Endothelial cell of umbilical vein (primary cell): ENCODE measurements at regions of chr10 and their contacts with region 1.

Region 1: GRCh38 chr10:117174439-117175214 is 22.7 kb upstream of the KCNK18 start:
- DNase-seq: peak; percentile 81
- H3K4me3 ChIP-seq: peak overlapping the region in 1 of 3 experiments; percentile 16
- H3K27ac ChIP-seq: no peak overlapping the region
- H3K4me1 ChIP-seq: peaks cover 9% of the 10 kb centered on the region
- H3K27me3 ChIP-seq: peaks cover 27 to 32% of the 10 kb centered on the region in 2 experiments
- CTCF ChIP-seq: peak; percentile 83 to 88
- POLR2A ChIP-seq: no peak

Region 2: DNA sequence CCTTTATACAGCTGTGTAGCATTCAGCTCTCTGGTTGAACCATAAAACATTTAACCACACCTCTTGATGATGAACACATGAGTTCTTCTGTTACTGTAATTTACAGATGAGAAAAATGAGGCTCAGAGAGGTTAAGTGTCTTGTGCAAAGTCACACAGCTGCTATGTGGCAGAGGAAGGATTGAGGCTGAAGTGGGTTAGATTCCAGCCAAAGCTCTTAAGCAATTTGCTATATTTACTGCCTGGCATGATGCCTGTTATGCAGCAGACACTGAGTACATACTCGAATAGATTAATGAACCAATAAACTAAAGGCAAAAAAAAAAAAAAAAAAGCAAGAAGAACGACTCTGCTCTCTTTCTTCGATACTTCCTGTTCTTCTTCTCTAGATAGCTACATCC is 937.4 kb before region 1 on chr10:
- CTCF ChIA-PET with region 1: no interaction called
- POLR2A ChIA-PET with region 1: no interaction called
- dilution Hi-C with region 1: no loop called
- intact Hi-C with region 1: no loop called
- DNase-seq: no peak
- H3K4me3 ChIP-seq: no peak overlapping the region
- H3K27ac ChIP-seq: no peak overlapping the region
- H3K4me1 ChIP-seq: no peaks in the 10 kb centered on the region
- H3K27me3 ChIP-seq: no peaks in the 10 kb centered on the region
- CTCF ChIP-seq: no peak
- POLR2A ChIP-seq: no peak

Region 3: GRCh38 chr10:116690356-116691322 is 484.0 kb before region 1 on chr10:
- CTCF ChIA-PET with region 1: interaction called, 15 read pairs
- POLR2A ChIA-PET with region 1: no interaction called
- dilution Hi-C with region 1: no loop called
- intact Hi-C with region 1: loop called (anchors 1 kb)
- DNase-seq: no peak
- H3K4me3 ChIP-seq: no peak overlapping the region
- H3K27ac ChIP-seq: no peak overlapping the region
- H3K4me1 ChIP-seq: no peaks in the 10 kb centered on the region
- H3K27me3 ChIP-seq: no peaks in the 10 kb centered on the region
- CTCF ChIP-seq: peak in 1 of 2 donors; percentile 12
- POLR2A ChIP-seq: no peak

Region 4: GRCh38 chr10:116796910-116797513 is 377.6 kb before region 1 on chr10:
- CTCF ChIA-PET with region 1: interaction called, 344 read pairs
- POLR2A ChIA-PET with region 1: no interaction called
- dilution Hi-C with region 1: loop called (anchors 25 kb)
- intact Hi-C with region 1: loop called (anchors 1 kb)
- DNase-seq: peak; percentile 69
- H3K4me3 ChIP-seq: no peak overlapping the region
- H3K27ac ChIP-seq: no peak overlapping the region
- H3K4me1 ChIP-seq: no peaks in the 10 kb centered on the region
- H3K27me3 ChIP-seq: no peaks in the 10 kb centered on the region
- CTCF ChIP-seq: peak; percentile 89 to 95
- POLR2A ChIP-seq: no peak

Region 5: DNA sequence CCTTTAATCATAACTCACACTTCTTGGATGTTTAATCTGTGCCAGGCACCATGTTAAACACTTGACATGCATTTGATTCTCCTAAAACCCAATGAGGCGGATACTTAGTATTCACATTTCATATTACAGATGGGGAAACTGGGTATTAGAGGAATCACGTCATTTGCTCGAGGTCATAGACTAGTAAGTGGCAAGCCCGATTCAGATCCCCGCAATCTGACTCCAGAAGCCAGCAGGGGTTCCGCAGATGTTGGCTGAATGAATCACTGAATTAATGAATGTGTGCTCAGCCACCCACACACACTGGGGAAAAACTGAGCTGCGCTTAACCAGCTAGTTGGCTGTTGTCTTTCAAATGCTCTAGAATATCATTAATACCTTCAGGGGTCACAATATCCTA is 347.8 kb before region 1 on chr10:
- CTCF ChIA-PET with region 1: interaction called, 19 read pairs
- POLR2A ChIA-PET with region 1: no interaction called
- dilution Hi-C with region 1: loop called (anchors 25 kb)
- intact Hi-C with region 1: no loop called
- DNase-seq: no peak
- H3K4me3 ChIP-seq: no peak overlapping the region
- H3K27ac ChIP-seq: no peak overlapping the region
- H3K4me1 ChIP-seq: no peaks in the 10 kb centered on the region
- H3K27me3 ChIP-seq: no peaks in the 10 kb centered on the region
- CTCF ChIP-seq: no peak
- POLR2A ChIP-seq: no peak

Region 6: GRCh38 chr10:117005027-117005526 is 169.6 kb before region 1 on chr10 and contains the start of gene SHTN1:
- CTCF ChIA-PET with region 1: interaction called, 8 read pairs
- POLR2A ChIA-PET with region 1: no interaction called
- dilution Hi-C with region 1: no loop called
- intact Hi-C with region 1: loop called (anchors 2 kb)
- DNase-seq: no peak
- H3K4me3 ChIP-seq: peak within 1 kb of the TSS; percentile 78 to 96 (median 82)
- H3K27ac ChIP-seq: peak within 1 kb of the TSS; percentile 77
- H3K4me1 ChIP-seq: peaks cover 13% of the 10 kb centered on the region
- H3K27me3 ChIP-seq: no peaks in the 10 kb centered on the region
- CTCF ChIP-seq: no peak
- POLR2A ChIP-seq: no peak
- total RNA-seq, gene SHTN1: 29.7 and 36.5 TPM in 2 replicates

Region 7: DNA sequence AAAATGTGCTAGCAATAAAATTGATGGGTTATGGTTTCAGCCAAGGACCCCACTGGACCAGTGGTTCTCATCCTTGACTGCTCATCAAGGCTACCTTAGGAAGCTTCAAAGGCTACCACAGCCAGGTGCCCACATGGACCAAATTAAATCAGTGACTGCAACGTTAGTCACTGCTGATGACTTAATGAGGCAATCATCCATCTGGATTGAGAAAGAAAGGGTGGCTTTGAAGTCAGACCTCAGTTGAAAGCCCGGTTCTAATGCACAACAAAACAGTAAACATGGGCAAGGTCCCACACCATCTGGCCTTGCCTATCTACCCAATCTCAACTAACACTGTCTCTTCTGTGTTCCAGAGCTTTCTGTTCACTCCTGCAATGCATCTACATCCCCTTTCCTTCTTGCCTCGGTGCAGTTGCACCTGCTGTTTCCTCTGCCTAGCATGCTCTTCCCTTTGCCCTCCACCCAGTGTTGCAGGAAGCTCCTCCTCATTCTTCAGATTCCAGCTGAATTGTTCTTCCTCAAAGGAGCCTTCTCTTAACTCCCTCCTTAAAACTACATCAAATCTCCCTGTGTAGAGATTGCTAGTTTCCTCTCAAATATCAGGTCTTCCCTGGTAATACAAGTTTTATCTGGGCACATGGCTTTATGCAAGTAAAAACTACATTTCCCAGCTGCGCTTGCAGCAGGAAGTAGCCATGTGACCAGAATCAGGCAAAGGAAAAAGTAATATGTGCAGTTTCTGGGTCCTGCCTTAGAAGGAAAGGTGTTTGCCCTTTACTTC is 12.4 kb after region 1 on chr10:
- CTCF ChIA-PET with region 1: interaction called, 23 read pairs
- POLR2A ChIA-PET with region 1: no interaction called
- dilution Hi-C with region 1: no loop called
- intact Hi-C with region 1: no loop called
- DNase-seq: no peak
- H3K4me3 ChIP-seq: no peak overlapping the region
- H3K27ac ChIP-seq: no peak overlapping the region
- H3K4me1 ChIP-seq: no peaks in the 10 kb centered on the region
- H3K27me3 ChIP-seq: no peaks in the 10 kb centered on the region
- CTCF ChIP-seq: no peak
- POLR2A ChIP-seq: no peak